Cardiac septum (tissue), 1 donor: ENCODE measurements at regions of chr5 and their contacts with region 1.

Region 1: DNA sequence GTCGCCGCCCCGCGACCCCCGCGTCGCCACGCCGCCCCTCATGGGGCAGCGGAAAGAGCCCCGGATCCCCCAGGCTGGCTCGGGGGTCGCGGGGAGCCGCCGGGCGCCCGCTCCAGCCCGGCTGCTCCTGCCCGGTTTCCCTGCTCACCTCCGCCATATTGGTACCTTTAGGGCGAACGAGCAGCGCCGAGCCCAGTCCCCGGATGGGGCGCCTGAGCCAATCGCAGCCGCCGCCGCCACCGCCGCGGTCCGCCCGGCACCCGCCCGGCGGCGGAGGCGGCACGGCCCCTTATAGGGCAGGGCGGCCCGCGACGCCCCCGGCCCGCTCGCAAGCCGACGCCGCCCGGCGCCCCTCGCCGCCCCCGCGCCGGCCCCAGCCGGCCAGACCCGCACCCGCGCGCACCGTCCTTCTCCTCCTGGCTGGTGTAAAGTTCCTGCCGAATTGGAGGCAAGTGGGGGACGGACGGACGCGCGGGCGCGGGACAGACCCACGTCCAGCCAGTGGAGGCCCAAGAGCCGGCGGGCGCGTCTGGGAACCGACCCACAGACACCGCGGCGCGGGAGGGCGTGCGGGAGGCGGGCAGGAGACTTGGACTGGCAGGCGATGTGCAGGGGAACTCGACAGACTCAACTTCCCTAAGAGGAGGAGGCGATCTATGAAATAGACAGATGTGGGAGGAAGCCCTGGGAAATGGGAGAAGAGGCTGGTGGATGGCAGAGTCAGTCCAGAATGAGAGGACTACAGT is at the start of gene MIER3:
- DNase-seq: peak; percentile 90
- total RNA-seq, gene MIER3: 14.8 TPM

Region 2: GRCh38 chr5:56909294-56910209 is 42.6 kb before region 1 on chr5 and contains the start of gene SETD9:
- intact Hi-C with region 1: loop called (anchors 1 kb)
- DNase-seq: peak; percentile 99
- total RNA-seq, gene SETD9: 14.2 TPM